Naive thymus-derived CD8-positive, alpha-beta T cell (primary cell): ENCODE measurements at regions of chr11 and their contacts with region 1.

Region 1: DNA sequence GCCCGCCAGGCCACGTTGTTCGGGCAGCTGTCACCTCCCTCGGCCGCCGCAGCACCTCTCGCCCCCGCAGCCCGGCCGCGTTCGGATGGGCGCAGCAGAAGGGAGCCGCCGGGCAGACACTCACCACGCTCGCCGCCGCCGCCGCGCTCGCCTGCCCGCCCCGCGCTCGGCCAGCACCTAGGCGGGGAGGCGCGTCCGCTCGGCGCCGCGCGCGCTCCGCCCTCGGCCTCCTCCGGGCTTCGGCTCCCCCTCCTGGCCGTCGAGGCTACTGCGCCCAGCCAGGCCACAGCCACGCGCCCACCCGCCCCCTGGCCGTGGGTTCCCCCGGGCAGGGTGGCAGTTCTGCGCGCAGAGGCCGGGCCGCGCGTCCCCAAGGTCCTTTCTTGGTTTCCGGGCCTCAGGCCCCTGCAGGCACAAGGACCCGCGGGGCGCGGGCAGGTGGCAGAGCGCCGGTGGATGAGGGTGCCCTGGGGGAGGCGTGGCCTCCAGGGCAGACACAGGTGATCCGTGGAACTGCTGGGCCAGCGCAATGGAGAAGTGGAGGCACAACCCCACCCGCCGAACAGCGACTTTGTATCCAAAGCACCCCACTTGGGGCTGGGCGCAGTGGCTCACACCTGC is at the start of gene SLC25A22:
- DNase-seq: peak; percentile 71 to 89 (median 84)
- ATAC-seq: peak; percentile 57 to 58
- H3K4me3 Mint-ChIP-seq: peak within 1 kb of the TSS; percentile 84 to 97 (median 90)
- H3K27ac Mint-ChIP-seq: peak within 1 kb of the TSS; percentile 82 to 98 (median 94)
- H3K4me1 Mint-ChIP-seq: peaks cover 4 to 29% (median 20%) of the 10 kb centered on the region in 4 donors
- H3K27me3 Mint-ChIP-seq: no peaks in the 10 kb centered on the region
- polyA plus RNA-seq, gene SLC25A22: 6.4 to 16.4 (median 6.5) TPM

Region 2: GRCh38 chr11:747158-748006 is 50.8 kb before region 1 on chr11 and contains the start of gene TALDO1:
- POLR2A ChIA-PET with region 1: interaction called, 12 read pairs
- DNase-seq: peak; percentile 48 to 82 (median 70)
- ATAC-seq: peak; percentile 80 to 87
- H3K4me3 Mint-ChIP-seq: peak within 1 kb of the TSS; percentile 79 to 91 (median 86)
- H3K27ac Mint-ChIP-seq: peak within 1 kb of the TSS; percentile 35 to 89 (median 79)
- H3K4me1 Mint-ChIP-seq: peaks cover 4 to 28% (median 22%) of the 10 kb centered on the region in 4 donors
- H3K27me3 Mint-ChIP-seq: no peaks in the 10 kb centered on the region
- polyA plus RNA-seq, gene TALDO1: 160 to 173 (median 166) TPM

Region 3: GRCh38 chr11:765025-765801 is 33.0 kb before region 1 on chr11:
- POLR2A ChIA-PET with region 1: no interaction called
- DNase-seq: peak; percentile 58 to 83 (median 66)
- ATAC-seq: peak; percentile 83 to 91
- H3K4me3 Mint-ChIP-seq: peak overlapping the region in 1 of 10 donors; percentile 24
- H3K27ac Mint-ChIP-seq: peak overlapping the region in 4 of 10 donors; percentile 28 to 77 (median 50)
- H3K4me1 Mint-ChIP-seq: peaks cover 0 to 3% (median 1%) of the 10 kb centered on the region in 4 donors
- H3K27me3 Mint-ChIP-seq: no peaks in the 10 kb centered on the region

Region 4: GRCh38 chr11:777288-778255 is 20.6 kb before region 1 on chr11 and contains the start of gene GATD1:
- POLR2A ChIA-PET with region 1: interaction called, 29 read pairs
- DNase-seq: peak; percentile 86 to 99 (median 93)
- ATAC-seq: peak; percentile 86 to 89
- H3K4me3 Mint-ChIP-seq: peak within 1 kb of the TSS; percentile 72 to 92 (median 82)
- H3K27ac Mint-ChIP-seq: peak within 1 kb of the TSS in 8 of 10 donors; percentile 43 to 90 (median 80)
- H3K4me1 Mint-ChIP-seq: peaks cover 5 to 42% (median 22%) of the 10 kb centered on the region in 4 donors
- H3K27me3 Mint-ChIP-seq: no peaks in the 10 kb centered on the region
- polyA plus RNA-seq, gene GATD1: 7.2 to 20.7 (median 12.8) TPM

Region 5: GRCh38 chr11:809287-810039 is 11.3 kb after region 1 on chr11 and contains the start of gene RPLP2:
- POLR2A ChIA-PET with region 1: interaction called, 24 read pairs
- DNase-seq: peak; percentile 95 to 100 (median 98)
- ATAC-seq: peak; percentile 82 to 87
- H3K4me3 Mint-ChIP-seq: peak within 1 kb of the TSS; percentile 88 to 98 (median 92)
- H3K27ac Mint-ChIP-seq: peak within 1 kb of the TSS; percentile 93 to 99 (median 99)
- H3K4me1 Mint-ChIP-seq: peaks cover 10 to 47% (median 39%) of the 10 kb centered on the region in 4 donors
- H3K27me3 Mint-ChIP-seq: no peaks in the 10 kb centered on the region
- polyA plus RNA-seq, gene RPLP2: 4,080 to 5,338 (median 4,376) TPM

Region 6: GRCh38 chr11:859509-860131 is 61.4 kb after region 1 on chr11:
- POLR2A ChIA-PET with region 1: no interaction called
- DNase-seq: no peak
- ATAC-seq: no peak
- H3K4me3 Mint-ChIP-seq: no peak overlapping the region
- H3K27ac Mint-ChIP-seq: no peak overlapping the region
- H3K4me1 Mint-ChIP-seq: peaks cover 5 to 11% (median 9%) of the 10 kb centered on the region in 4 donors
- H3K27me3 Mint-ChIP-seq: no peaks in the 10 kb centered on the region